Vagina (tissue), 2 donors: ENCODE measurements at regions of chr16 and their contacts with region 1.

Region 1: DNA sequence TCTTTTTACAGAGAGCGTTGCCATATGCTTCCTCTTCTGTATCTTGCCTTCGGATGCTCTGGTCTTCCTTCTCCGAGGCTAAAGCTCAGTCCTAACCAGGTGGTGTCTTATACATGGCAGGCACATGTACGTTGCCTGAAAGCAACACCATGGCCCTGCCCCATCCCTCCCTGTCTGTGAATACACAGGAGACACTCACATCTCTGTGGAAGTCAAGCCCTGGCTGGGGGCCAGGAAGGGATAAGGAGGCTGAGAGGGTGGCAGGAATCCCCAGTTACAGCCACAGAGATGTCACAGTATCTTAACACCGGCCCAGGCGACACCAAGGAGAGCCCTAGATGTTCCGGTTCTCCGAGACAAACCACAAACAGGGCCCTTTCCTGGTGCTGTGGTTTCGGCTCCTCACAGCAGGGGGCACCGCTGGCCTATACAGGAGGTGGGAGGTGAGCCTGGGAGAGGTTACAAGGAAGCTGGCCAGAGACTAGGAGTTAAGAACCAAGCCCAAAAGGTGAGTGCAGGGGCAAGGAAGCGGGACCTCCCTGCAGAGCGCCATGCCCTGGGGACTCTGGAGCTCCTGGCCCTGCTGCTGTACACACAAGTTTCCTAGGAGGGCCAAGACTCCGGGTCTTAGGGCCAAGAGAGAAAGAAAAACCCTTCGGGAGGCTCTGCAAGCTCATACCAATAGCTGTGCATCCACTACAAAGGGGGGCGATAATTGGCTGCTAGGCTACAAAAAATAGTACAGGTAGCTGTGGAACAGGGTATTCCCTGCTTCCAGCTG is 41.7 kb downstream of the SRL start:
- DNase-seq: no peak
- H3K4me3 ChIP-seq: no peak overlapping the region
- H3K27ac ChIP-seq: no peak overlapping the region
- H3K4me1 ChIP-seq: no peaks in the 10 kb centered on the region
- H3K27me3 ChIP-seq: no peaks in the 10 kb centered on the region
- CTCF ChIP-seq: peak; percentile 65 to 72 (median 67)
- POLR2A ChIP-seq: no peak

Region 2: DNA sequence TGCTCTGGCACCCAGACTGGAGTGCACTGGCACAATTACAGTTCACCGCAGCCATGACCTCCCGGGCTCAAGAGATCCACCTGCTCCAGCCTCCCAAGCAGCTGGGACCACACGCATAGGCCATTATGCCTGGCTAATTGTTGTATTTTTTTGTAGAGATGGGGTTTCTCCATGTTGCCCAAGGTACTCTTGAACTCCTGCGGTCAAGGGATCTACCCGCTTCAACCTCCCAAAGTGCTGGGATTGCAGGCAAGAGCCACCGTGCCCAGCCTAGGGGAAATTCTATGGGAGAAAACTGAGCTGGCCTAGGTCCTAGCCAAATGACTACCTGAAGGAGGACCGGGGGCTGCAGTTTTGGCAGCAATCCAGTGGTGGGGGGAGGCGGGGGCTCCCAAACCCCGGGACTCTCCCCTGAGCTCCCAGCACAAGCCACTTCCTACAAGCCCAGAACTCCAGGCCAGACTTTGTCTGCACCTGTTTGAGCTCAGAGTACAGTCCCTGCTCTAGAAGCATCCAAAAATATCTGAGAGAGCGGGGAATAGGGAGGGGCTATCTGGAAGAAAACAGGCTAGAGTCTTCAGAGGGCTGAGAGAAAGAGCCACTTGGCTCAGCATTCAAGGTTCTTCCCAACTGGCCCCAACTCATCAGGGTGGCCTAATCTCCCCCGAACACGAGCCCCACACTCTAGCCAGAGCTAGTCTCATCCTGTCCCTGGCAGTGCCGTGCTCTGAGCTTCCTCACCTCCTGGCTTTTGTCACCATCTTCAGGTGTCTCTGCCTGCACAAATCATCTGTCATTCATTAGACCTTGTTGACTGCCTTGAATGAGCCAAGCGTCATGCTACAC is 32.6 kb after region 1 on chr16:
- intact Hi-C with region 1: no loop called
- DNase-seq: no peak
- H3K4me3 ChIP-seq: no peak overlapping the region
- H3K27ac ChIP-seq: no peak overlapping the region
- H3K4me1 ChIP-seq: no peaks in the 10 kb centered on the region
- H3K27me3 ChIP-seq: no peaks in the 10 kb centered on the region
- CTCF ChIP-seq: no peak
- POLR2A ChIP-seq: no peak

Region 3: DNA sequence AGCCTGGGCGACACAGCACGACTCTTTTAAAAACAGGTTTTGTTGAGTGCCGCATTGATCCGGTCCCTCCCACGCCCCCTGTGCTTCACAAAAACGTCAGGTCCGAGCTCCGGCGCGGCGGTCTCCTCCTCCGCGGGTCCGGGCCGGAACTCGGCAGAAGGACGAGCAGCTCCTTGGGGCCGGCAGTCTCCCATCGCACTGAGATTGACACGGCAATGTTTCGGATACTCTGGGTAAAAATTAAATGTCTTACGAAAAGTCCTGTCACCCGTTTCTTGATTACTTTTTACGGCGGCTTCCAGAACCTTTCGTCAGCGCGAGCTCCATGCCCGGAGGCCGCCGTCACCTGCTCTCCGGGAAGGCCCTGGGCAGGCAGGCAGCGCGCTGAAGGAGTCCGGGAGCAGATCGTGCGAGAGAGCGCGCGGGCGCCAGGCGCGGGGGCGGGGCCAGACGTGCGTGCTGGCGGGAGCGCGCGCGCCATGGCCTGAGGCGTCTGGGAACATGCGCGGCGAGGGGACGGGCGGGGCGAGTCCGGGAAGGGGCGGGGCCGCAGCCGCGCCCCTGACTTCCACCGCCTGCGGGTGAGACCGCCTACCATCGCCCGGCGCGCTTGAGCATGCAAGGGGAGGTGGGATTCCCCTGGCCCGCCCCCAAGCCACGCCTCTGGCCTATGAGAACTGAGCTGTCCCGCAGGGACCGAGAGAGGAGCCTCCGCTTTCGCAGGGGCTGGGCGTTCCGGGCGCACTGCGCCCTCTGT is 53.4 kb after region 1 on chr16:
- intact Hi-C with region 1: loop called (anchors 5 kb)
- DNase-seq: peak; percentile 99
- H3K4me3 ChIP-seq: peak overlapping the region; percentile 54
- H3K27ac ChIP-seq: peak overlapping the region; percentile 83
- H3K4me1 ChIP-seq: peaks cover 13% of the 10 kb centered on the region
- H3K27me3 ChIP-seq: no peaks in the 10 kb centered on the region
- CTCF ChIP-seq: peak in 1 of 3 experiments; percentile 92
- POLR2A ChIP-seq: peak in 1 of 2 donors; percentile 74

Region 4: DNA sequence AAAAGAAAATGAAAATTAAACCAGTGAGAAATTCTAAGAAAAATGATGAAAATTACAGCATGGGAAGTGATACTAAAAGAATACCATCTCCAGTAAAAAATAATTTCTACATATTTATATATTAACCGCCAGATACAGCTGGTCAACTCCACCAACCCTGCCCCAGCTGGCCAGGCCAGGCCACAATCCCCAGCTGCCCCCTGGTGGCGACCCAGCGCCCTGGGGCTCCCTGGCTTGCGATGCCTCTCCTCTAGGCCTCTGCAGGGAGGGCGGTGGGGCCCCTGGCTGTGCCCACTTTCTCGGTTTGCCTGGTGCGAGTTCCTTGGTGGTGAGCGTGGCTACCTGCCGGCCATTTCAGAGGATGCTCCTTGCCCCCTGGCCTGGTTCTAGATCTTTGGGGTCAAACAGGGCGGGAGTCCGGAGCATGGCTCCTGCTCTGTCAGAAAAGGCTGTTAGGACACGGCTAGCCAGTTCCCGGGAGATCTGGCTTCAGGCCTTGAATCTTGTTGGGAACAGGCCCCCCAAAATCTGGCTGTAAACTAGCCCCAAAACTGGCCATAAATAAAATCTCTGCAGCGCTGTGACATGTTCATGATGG is 130.2 kb after region 1 on chr16:
- intact Hi-C with region 1: loop called (anchors 10 kb)
- DNase-seq: no peak
- H3K4me3 ChIP-seq: no peak overlapping the region
- H3K27ac ChIP-seq: no peak overlapping the region
- H3K4me1 ChIP-seq: peaks cover 41% of the 10 kb centered on the region
- H3K27me3 ChIP-seq: no peaks in the 10 kb centered on the region
- CTCF ChIP-seq: peak; percentile 94 to 98 (median 95)
- POLR2A ChIP-seq: no peak